Colonic mucosa (tissue), 4 donors: ENCODE measurements at regions of chr10 and their contacts with region 1.

Region 1: DNA sequence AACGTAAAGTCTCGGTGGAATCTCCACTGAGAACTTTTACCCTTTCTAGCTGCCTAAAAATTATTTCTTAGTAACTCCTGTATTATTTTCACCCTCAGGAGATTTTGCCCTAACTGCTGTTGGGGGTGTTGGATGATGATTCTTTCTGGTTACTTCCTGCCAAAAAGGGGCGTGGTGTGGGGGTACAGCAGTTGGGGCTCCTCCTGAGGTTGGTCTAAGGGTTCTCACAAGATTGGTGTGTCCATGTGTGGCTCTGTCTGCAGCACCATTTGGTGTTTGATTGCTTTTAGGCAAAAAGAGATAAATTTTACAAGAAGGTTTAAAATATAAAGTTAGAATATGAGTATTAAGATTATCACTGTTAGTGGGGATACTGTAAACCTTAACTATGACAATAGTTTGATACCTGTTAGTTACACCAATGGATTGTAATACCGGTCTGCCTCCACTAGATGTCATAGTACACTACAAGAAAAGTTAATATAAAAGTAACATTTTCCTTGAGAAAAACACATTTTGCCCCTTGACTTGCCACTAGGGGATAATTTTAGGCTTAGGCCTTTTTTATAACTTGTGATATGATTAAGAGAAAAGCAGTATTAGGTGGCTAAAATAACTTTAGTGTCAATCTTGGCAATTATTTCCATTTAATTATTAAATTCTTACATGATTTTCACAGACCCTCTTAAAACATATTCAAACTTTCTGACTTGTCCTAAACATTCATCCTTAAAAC is 928.7 kb downstream of the IPMK start:
- DNase-seq: no peak
- H3K4me3 ChIP-seq: no peak overlapping the region
- H3K27ac ChIP-seq: no peak overlapping the region
- H3K4me1 ChIP-seq: no peaks in the 10 kb centered on the region
- H3K27me3 ChIP-seq: no peaks in the 10 kb centered on the region
- CTCF ChIP-seq: peak; percentile 62

Region 2: GRCh38 chr10:57113545-57113944 is 225.4 kb before region 1 on chr10:
- intact Hi-C with region 1: no loop called
- DNase-seq: no peak
- H3K4me3 ChIP-seq: no peak overlapping the region
- H3K27ac ChIP-seq: no peak overlapping the region
- H3K4me1 ChIP-seq: no peaks in the 10 kb centered on the region
- H3K27me3 ChIP-seq: no peaks in the 10 kb centered on the region
- CTCF ChIP-seq: no peak

Region 3: GRCh38 chr10:57605948-57606485 is 267.0 kb after region 1 on chr10:
- intact Hi-C with region 1: no loop called
- DNase-seq: no peak
- H3K4me3 ChIP-seq: no peak overlapping the region
- H3K27ac ChIP-seq: no peak overlapping the region
- H3K4me1 ChIP-seq: no peaks in the 10 kb centered on the region
- H3K27me3 ChIP-seq: no peaks in the 10 kb centered on the region
- CTCF ChIP-seq: no peak

Region 4: GRCh38 chr10:57657164-57657765 is 318.3 kb after region 1 on chr10:
- intact Hi-C with region 1: loop called (anchors 10 kb)
- DNase-seq: peak; percentile 50
- H3K4me3 ChIP-seq: no peak overlapping the region
- H3K27ac ChIP-seq: no peak overlapping the region
- H3K4me1 ChIP-seq: no peaks in the 10 kb centered on the region
- H3K27me3 ChIP-seq: no peaks in the 10 kb centered on the region
- CTCF ChIP-seq: peak; percentile 67

Region 5: DNA sequence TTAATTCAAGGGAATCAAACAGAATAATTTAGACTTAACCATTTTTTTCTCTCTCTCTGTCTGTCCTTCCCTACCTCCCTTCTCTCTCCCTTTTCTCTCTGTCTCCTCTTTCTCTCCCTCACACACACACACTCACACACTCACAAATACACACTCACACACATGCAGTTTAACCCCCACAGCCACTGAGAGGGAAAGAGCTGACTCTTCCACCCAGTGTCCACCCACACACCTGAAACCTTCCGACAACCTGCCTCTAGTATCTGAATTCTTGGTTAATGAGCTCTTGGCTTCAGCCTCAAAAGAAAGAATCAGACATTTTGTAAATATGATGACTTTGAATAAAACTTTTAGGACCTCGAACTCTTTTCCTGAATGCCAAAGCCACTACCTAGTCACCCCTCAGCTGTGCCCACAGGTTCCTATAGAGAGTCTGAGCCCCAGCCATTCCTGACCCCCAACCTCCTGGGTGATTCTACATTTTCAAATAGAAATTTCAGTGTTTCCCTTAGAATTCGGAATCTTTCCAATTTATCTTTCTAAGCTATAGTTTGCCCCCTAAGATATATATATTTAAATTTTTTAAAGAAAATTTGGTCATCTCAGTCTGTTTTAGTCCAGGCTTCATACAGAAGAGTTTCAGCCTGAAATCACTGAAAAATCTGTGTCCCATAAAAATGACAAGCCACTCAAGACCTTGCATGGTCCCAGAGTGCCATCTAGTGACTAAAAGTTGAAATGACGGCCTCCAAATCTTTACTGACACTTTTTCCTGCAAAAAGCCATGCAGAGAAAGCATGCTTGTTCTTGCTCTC is 725.9 kb after region 1 on chr10:
- intact Hi-C with region 1: loop called (anchors 5 kb)
- DNase-seq: peak; percentile 45
- H3K4me3 ChIP-seq: no peak overlapping the region
- H3K27ac ChIP-seq: no peak overlapping the region
- H3K4me1 ChIP-seq: no peaks in the 10 kb centered on the region
- H3K27me3 ChIP-seq: no peaks in the 10 kb centered on the region
- CTCF ChIP-seq: peak; percentile 56

Region 6: GRCh38 chr10:58152673-58153263 is 813.8 kb after region 1 on chr10:
- intact Hi-C with region 1: loop called (anchors 5 kb)
- DNase-seq: peak; percentile 59
- H3K4me3 ChIP-seq: no peak overlapping the region
- H3K27ac ChIP-seq: no peak overlapping the region
- H3K4me1 ChIP-seq: no peaks in the 10 kb centered on the region
- H3K27me3 ChIP-seq: no peaks in the 10 kb centered on the region
- CTCF ChIP-seq: peak; percentile 49